MCF 10A (cell line): ENCODE measurements at regions of chr2 and their contacts with region 1.

Region 1: DNA sequence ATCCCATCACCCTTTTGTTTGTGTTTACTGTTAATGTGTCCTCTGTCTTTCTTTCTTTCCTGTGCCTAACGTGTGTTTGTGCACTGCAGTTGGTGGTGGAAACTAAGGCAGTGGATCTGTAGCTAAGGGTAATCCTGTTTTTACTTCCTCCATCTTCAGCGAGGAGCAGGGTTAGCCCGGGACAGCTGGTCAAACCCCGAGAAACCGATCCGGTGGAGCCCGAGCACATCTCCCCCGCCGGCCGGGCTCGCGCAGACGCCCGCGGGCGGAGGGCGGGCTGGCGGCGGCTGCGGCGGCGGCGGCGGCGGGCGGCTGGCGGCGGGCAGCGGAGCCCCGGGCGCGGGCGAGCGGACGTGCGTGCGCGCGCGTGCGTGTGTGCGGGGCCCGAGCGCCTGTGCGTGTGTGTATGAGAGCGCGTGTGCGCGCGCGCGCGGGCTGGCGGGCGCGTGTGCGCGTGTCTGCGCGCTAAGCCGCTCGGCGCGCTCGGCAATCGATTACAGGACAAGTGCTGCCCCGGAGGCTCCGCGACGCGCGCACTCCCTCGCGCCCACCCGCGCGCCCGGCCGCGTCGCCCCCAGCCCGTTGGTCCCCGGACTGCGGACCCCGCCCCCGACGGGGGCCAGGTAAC is at the start of gene IKZF2:
- DNase-seq: peak; percentile 77
- H3K4me3 Mint-ChIP-seq: peak within 1 kb of the TSS; percentile 86
- H3K27ac Mint-ChIP-seq: peak within 1 kb of the TSS; percentile 91
- H3K4me1 Mint-ChIP-seq: peaks cover 18% of the 10 kb centered on the region
- H3K27me3 Mint-ChIP-seq: no peaks in the 10 kb centered on the region
- CTCF ChIP-seq: no peak
- total RNA-seq, gene IKZF2: 6.0 and 8.8 TPM in 2 replicates

Region 2: GRCh38 chr2:212777020-212777491 is 374.5 kb before region 1 on chr2:
- CTCF ChIA-PET with region 1: interaction called, 190 read pairs
- POLR2A ChIA-PET with region 1: interaction called, 15 read pairs
- intact Hi-C with region 1: loop called (anchors 1 kb)
- DNase-seq: peak; percentile 61
- H3K4me3 Mint-ChIP-seq: no peak overlapping the region
- H3K27ac Mint-ChIP-seq: no peak overlapping the region
- H3K4me1 Mint-ChIP-seq: no peaks in the 10 kb centered on the region
- H3K27me3 Mint-ChIP-seq: no peaks in the 10 kb centered on the region
- CTCF ChIP-seq: peak; percentile 53

Region 3: DNA sequence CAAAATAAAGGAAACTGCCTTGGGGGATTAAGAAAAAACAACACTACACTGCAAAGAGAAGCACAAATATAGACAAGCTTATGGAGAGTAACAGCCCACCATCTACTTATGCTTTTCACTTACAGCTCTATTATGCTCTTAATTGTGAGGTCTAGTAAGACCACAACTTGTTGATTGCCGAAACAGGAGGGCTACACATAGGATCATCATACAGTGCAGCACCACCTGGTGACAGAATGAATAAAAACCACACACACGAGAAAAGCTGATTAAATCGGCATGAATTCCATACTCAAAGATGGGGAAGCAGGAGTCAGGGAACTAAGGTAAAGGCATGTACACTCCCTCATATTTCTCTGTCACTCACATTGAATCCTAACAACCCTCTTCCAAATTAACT is 259.4 kb before region 1 on chr2:
- CTCF ChIA-PET with region 1: interaction called, 17 read pairs
- POLR2A ChIA-PET with region 1: interaction called, 17 read pairs
- intact Hi-C with region 1: no loop called
- DNase-seq: peak; percentile 58
- H3K4me3 Mint-ChIP-seq: no peak overlapping the region
- H3K27ac Mint-ChIP-seq: no peak overlapping the region
- H3K4me1 Mint-ChIP-seq: peaks cover 6% of the 10 kb centered on the region
- H3K27me3 Mint-ChIP-seq: no peaks in the 10 kb centered on the region
- CTCF ChIP-seq: peak; percentile 37

Region 4: GRCh38 chr2:212926940-212927339 is 224.6 kb before region 1 on chr2:
- CTCF ChIA-PET with region 1: interaction called, 5 read pairs
- POLR2A ChIA-PET with region 1: interaction called, 7 read pairs
- intact Hi-C with region 1: loop called (anchors 5 kb)
- DNase-seq: no peak
- H3K4me3 Mint-ChIP-seq: no peak overlapping the region
- H3K27ac Mint-ChIP-seq: peak overlapping the region; percentile 61
- H3K4me1 Mint-ChIP-seq: peaks cover 28% of the 10 kb centered on the region
- H3K27me3 Mint-ChIP-seq: no peaks in the 10 kb centered on the region
- CTCF ChIP-seq: no peak

Region 5: DNA sequence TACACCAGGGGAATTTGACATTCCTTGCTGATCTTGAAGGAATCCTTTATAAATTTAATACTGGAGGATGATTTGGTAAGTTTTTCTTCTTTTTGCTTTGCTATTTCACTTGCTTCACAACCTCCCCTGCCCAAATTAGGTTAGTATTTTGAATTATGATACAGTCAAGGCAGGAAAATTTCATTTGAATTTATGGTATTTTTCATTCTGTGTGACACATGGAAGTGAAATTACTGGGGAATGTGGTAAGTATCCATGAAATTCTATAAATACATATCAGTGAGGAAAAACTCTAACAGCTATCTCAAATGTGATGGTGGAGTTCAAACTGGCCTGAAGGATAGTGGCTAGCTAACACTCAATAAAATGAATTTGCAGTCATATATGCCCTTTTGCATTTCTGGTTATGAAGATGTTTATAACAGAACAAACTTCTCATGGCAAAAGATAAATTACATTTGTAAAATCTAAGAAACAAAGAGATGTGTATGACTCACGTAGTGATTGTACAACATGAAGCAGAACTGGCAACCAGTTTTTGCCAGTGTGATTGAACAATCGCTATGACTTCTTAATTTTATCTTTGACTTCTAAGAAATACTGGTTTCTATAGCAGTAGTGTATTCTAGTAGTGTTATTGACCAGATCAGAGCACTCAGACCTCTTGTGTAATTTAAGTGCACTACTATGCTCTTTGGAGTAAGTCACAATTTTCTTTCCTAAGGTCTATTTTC is 152.8 kb before region 1 on chr2:
- CTCF ChIA-PET with region 1: interaction called, 4 read pairs
- POLR2A ChIA-PET with region 1: interaction called, 4 read pairs
- intact Hi-C with region 1: loop called (anchors 2 kb)
- DNase-seq: peak; percentile 55
- H3K4me3 Mint-ChIP-seq: no peak overlapping the region
- H3K27ac Mint-ChIP-seq: no peak overlapping the region
- H3K4me1 Mint-ChIP-seq: peaks cover 23% of the 10 kb centered on the region
- H3K27me3 Mint-ChIP-seq: no peaks in the 10 kb centered on the region
- CTCF ChIP-seq: no peak

Region 6: GRCh38 chr2:213104903-213105202 is 46.7 kb before region 1 on chr2:
- CTCF ChIA-PET with region 1: no interaction called
- POLR2A ChIA-PET with region 1: no interaction called
- intact Hi-C with region 1: no loop called
- DNase-seq: no peak
- H3K4me3 Mint-ChIP-seq: no peak overlapping the region
- H3K27ac Mint-ChIP-seq: no peak overlapping the region
- H3K4me1 Mint-ChIP-seq: peaks cover 10% of the 10 kb centered on the region
- H3K27me3 Mint-ChIP-seq: no peaks in the 10 kb centered on the region
- CTCF ChIP-seq: no peak

Region 7: GRCh38 chr2:213161759-213162515 is 10.4 kb after region 1 on chr2:
- CTCF ChIA-PET with region 1: interaction called, 17 read pairs
- POLR2A ChIA-PET with region 1: interaction called, 4 read pairs
- intact Hi-C with region 1: no loop called
- DNase-seq: no peak
- H3K4me3 Mint-ChIP-seq: no peak overlapping the region
- H3K27ac Mint-ChIP-seq: no peak overlapping the region
- H3K4me1 Mint-ChIP-seq: peaks cover 14% of the 10 kb centered on the region
- H3K27me3 Mint-ChIP-seq: no peaks in the 10 kb centered on the region
- CTCF ChIP-seq: no peak

Region 8: DNA sequence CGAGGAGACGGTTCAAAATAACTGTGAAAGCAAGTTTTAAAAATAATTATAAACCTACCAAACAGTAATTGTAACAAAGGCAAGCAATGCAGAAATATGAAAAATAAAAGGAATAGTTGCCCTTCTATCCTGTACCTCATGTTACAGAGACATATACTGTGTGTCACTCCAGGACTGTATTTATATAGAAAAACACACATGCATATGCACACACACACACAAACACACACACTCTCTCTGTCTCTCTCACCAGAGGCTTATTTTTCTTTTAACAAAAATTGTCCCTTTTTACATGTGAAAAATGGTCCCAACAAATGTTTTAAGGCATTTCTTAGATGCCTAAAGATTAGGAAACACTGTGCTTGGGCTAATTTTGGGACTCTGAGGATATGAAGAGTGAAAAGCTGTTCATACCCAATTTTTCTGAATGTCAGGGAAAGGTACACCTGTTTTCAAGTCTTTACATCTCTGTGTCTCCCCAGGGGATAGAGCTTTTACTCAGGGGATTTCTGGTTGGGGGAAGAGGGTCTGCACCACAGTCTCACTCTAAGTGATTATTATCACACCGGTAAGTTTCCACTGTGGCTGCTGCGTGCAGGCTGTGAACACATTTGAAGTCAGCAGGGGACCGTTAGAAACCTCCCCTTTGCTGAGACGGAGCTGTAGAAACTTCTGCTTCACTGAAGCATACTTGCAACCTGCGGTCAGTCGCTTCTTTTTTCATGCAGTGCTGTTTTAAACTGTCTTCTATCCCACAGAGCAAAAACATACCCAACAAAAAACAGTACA is 81.3 kb after region 1 on chr2:
- CTCF ChIA-PET with region 1: no interaction called
- POLR2A ChIA-PET with region 1: no interaction called
- intact Hi-C with region 1: no loop called
- DNase-seq: no peak
- H3K4me3 Mint-ChIP-seq: no peak overlapping the region
- H3K27ac Mint-ChIP-seq: peak overlapping the region; percentile 14
- H3K4me1 Mint-ChIP-seq: peaks cover 22% of the 10 kb centered on the region
- H3K27me3 Mint-ChIP-seq: no peaks in the 10 kb centered on the region
- CTCF ChIP-seq: no peak